ENCODE measurements at regions of chr3 and their contacts with region 1.

Region 1: GRCh38 chr3:81666493-81667121 is 94.8 kb downstream of the GBE1 start:
- DNase-seq: no peak
- H3K4me3 ChIP-seq: no peak overlapping the region
- H3K27ac ChIP-seq: no peak overlapping the region
- H3K4me1 ChIP-seq: no peaks in the 10 kb centered on the region
- H3K27me3 ChIP-seq: no peaks in the 10 kb centered on the region
- CTCF ChIP-seq: peak in 2 of 4 experiments; percentile 49 to 69
- POLR2A ChIP-seq: no peak

Region 2: DNA sequence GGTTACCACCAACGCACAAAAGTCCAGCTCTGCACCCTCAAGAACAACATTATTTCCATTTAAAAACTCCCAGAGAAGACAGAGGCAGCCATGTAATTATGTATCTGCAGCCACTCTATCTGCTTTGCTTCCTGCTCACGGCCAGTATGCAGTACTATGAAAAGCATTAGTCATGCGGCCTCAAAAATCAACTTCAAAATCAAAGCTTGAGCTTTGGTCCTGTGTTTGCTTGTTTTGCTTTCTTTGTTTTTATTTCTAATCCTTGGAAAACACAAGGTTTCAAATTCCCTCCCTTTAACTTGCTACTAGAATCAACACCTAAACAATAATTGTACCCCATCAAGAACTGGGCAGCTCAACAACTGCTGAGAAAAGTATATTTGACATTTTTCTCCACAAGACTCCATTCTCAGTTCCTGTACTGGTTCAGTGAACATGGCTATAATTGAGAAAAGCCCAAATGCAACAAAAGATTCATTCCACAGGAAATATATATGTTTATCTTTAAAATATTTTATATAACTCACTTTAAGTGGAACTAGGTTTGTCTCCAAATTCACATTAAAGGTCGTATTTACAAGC is 57.2 kb after region 1 on chr3:
- intact Hi-C with region 1: no loop called
- DNase-seq: no peak
- H3K4me3 ChIP-seq: no peak overlapping the region
- H3K27ac ChIP-seq: no peak overlapping the region
- H3K4me1 ChIP-seq: no peaks in the 10 kb centered on the region
- H3K27me3 ChIP-seq: no peaks in the 10 kb centered on the region
- CTCF ChIP-seq: no peak
- POLR2A ChIP-seq: no peak

Region 3: DNA sequence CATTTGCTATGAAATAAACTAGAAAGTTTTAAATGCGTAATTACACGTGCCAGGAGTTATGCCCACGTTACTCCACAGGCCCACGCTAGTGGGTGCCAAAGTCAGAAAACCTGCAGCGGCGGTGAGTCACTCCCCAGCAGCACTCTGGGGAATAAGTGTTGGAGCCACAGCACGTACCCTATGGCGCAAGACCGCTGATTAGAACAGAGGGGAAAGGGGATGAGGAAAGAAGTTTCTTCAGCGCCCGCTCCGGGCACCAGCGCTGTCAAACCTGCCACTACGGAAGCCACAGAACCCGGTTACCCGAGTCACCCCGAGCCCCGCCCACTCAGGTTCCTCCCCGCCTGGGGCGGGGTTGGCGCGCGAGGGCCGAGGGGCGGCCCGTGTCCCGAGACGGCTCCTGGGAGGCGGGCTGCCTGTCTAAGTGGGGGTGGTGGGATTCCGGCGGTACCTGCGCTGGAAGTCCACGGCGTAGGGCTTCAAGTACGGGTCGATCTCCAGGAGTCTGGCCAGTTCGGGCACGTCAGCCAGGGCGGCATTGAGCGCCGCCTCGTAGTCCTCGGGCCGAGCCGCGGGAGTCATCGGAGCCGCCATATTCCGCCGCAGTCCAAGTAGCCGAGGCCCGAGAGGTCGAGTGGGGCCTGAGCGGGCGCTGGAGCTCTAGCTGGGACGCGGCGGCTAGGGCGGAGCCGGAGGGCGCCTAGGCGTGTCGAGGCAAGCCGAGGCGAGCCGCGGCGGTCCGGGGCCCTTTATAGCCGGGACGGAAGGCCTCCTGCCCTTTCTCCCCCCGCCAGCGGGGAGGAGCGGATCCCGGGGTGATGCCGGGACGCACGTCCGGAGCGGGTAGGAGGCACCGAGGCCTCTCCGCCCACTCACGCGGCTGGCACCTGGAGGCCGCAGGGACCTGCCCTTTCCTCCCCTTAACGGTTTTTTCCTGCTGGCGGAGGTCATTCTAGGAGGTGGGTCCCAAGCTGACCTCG is 94.6 kb after region 1 on chr3 and contains the start of gene GBE1:
- intact Hi-C with region 1: loop called (anchors 10 kb)
- DNase-seq: peak; percentile 92
- H3K4me3 ChIP-seq: peak within 1 kb of the TSS; percentile 81
- H3K27ac ChIP-seq: peak within 1 kb of the TSS; percentile 99
- H3K4me1 ChIP-seq: no peaks in the 10 kb centered on the region
- H3K27me3 ChIP-seq: no peaks in the 10 kb centered on the region
- CTCF ChIP-seq: peak in 2 of 4 experiments; percentile 33 to 50
- POLR2A ChIP-seq: peak; percentile 59
- total RNA-seq, gene GBE1: 15.8 to 18.3 TPM

Region 4: DNA sequence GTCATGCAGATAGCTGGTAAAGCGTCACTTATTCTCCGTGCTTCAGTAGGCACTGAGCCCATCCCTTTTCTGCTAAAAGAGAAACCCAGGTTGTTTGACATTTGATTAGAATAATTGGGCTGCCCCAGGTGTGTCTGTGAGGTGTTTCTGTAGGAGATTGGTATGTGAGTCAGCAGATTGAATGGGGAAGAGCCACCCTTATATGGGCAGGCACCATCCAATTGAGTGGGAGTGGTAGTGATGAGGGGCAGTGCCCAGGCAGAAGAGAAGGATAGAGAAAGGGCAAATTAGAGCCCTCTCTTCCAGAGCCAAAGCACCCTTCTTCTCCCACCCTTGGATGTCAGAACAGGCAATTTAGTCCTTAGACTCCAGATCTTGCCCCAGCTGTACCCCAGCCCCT is 479.1 kb after region 1 on chr3:
- intact Hi-C with region 1: no loop called
- DNase-seq: no peak
- H3K4me3 ChIP-seq: no peak overlapping the region
- H3K27ac ChIP-seq: no peak overlapping the region
- H3K4me1 ChIP-seq: no peaks in the 10 kb centered on the region
- H3K27me3 ChIP-seq: no peaks in the 10 kb centered on the region
- CTCF ChIP-seq: no peak
- POLR2A ChIP-seq: no peak